ENCODE measurements at regions of chr20 and their contacts with region 1.

Region 1: GRCh38 chr20:35954200-35954906 is at the start of gene SCAND1:
- DNase-seq: peak; percentile 99
- H3K4me3 ChIP-seq: peak within 1 kb of the TSS; percentile 92 to 100 (median 99)
- H3K27ac ChIP-seq: peak within 1 kb of the TSS; percentile 96
- H3K4me1 ChIP-seq: peaks cover 14% of the 10 kb centered on the region
- H3K27me3 ChIP-seq: no peaks in the 10 kb centered on the region
- CTCF ChIP-seq: peak; percentile 85 to 99
- total RNA-seq, gene SCAND1: 41.5 to 46.3 TPM

Region 2: GRCh38 chr20:35664544-35665221 is 289.7 kb before region 1 on chr20 and contains the starts of genes CPNE1 and RBM12:
- CTCF ChIA-PET with region 1: no interaction called
- dilution Hi-C with region 1: no loop called
- in situ Hi-C with region 1: no loop called
- intact Hi-C with region 1: loop called (anchors 5 kb)
- DNase-seq: peak; percentile 84
- H3K4me3 ChIP-seq: peak within 1 kb of the TSS; percentile 65 to 97 (median 87)
- H3K27ac ChIP-seq: peak within 1 kb of the TSS; percentile 89
- H3K4me1 ChIP-seq: peaks cover 30% of the 10 kb centered on the region
- H3K27me3 ChIP-seq: no peaks in the 10 kb centered on the region
- CTCF ChIP-seq: no peak
- total RNA-seq, gene CPNE1: 110 to 157 TPM
- total RNA-seq, gene RBM12: 62.8 to 71.2 TPM

Region 3: DNA sequence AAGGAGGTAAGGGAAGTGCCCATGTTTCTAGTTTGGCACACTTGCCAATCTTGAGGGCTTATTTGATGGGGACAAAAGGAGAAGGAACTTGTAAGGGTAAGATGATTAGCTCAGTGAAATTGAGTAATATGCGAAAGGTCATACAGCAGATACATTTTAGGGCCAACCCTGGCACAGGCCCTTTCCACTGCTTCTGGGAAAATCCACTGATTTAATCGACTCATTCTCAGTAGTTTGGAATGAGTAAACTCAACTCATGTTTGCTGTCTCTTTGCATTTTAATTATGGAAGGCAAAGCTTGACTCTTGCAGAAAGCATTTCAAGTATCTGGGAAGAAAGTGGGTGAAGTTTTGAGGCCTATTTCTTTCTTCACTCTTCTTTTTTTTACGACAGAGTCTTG is 162.5 kb before region 1 on chr20:
- CTCF ChIA-PET with region 1: no interaction called
- dilution Hi-C with region 1: no loop called
- in situ Hi-C with region 1: no loop called
- intact Hi-C with region 1: no loop called
- DNase-seq: peak; percentile 43
- H3K4me3 ChIP-seq: no peak overlapping the region
- H3K27ac ChIP-seq: no peak overlapping the region
- H3K4me1 ChIP-seq: no peaks in the 10 kb centered on the region
- H3K27me3 ChIP-seq: no peaks in the 10 kb centered on the region
- CTCF ChIP-seq: no peak

Region 4: DNA sequence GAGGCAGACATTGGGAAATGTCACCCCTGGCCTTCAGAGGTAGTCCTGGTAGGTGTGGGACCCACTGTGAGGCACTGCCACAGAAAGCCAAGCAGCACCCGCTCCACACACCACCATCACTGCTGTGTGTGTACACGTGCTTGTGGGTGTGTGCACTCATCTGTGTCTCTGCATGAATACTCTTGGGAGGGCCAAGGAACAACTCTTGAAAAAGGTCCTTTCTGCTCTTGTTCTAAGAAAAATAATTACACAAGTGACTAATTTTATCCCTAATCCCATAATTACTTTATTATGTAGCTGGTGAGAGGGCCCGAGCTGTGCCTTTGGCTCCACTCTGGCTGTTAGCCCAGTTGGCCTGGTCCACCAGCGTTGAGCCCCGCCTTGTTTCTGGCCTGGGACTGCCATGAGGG is 178.5 kb after region 1 on chr20:
- CTCF ChIA-PET with region 1: no interaction called
- dilution Hi-C with region 1: no loop called
- in situ Hi-C with region 1: no loop called
- intact Hi-C with region 1: loop called (anchors 1 kb)
- DNase-seq: no peak
- H3K4me3 ChIP-seq: no peak overlapping the region
- H3K27ac ChIP-seq: no peak overlapping the region
- H3K4me1 ChIP-seq: peaks cover 9% of the 10 kb centered on the region
- H3K27me3 ChIP-seq: no peaks in the 10 kb centered on the region
- CTCF ChIP-seq: no peak